Activated CD8-positive, alpha-beta T cell treated with anti-CD3 and anti-CD28 coated beads, Interleukin-2, amount 10 ng/mL, durations not matched to agents 7 days and 5 days (primary cell): ENCODE measurements at regions of chr1 and their contacts with region 1.

Region 1: DNA sequence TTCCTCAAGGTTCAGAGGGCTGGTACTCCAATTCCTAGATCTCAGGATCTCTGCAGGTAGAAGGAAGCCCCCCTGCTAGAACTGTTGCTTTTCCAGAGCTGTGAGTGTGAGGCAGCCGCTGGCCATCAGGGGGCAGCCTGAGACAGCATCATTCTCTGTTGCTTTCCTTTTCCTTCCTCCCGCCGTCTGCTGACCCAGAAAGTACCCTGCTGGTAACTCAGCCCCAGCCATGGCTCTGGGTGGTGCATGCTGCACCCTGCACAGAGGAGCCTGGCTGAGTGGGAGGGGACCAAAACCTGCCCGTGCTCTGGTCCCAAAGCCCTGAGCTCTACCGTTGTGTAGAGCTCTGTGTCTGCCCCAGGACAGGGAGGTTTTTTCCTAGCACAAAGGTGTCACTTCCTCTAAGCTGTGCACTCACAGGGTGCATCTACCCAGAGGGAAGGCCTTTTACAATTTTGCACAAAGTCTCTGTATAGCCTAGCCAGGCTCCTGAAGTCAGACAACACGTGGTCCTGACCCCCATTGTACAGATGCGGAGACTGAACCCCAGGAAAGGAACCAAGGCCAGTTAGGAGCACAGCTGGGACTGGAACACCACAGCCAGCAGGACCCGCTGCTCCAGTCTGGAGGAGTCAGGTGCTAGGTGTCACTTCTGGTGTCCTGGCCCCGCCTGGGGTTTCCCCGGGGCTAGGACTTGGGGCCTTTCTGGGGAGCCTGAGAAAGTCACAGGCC is 5.6 kb upstream of the FAM131C start:
- DNase-seq: peak; percentile 84
- ATAC-seq: peak; percentile 89
- H3K4me3 Mint-ChIP-seq: peak overlapping the region; percentile 56
- H3K27ac Mint-ChIP-seq: peak overlapping the region; percentile 83
- H3K4me1 Mint-ChIP-seq: peaks cover 14% of the 10 kb centered on the region
- H3K27me3 Mint-ChIP-seq: peaks cover 5% of the 10 kb centered on the region

Region 2: DNA sequence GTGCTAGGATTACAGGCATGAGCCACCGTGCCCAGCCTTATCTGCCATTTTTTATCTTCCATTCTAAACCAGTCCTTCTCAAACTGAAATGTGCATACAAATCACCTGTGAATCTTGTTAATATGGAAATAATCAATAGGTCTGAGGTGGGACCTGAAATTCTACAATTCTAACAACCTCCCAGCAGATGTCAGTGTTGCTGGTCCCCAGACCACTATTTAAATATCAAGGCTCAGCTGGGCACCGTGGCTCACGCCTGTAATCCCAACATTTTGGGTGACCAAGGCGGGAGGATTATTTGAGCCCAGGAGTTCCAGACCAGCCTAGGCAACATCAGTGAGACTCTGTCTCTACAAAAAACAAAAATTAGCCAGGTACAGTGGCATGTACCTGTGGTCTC is 275.7 kb before region 1 on chr1:
- CTCF ChIA-PET with region 1: no interaction called
- POLR2A ChIA-PET with region 1: no interaction called
- DNase-seq: peak; percentile 34
- ATAC-seq: no peak
- H3K4me3 Mint-ChIP-seq: no peak overlapping the region
- H3K27ac Mint-ChIP-seq: no peak overlapping the region
- H3K4me1 Mint-ChIP-seq: no peaks in the 10 kb centered on the region
- H3K27me3 Mint-ChIP-seq: peaks cover 10% of the 10 kb centered on the region

Region 3: DNA sequence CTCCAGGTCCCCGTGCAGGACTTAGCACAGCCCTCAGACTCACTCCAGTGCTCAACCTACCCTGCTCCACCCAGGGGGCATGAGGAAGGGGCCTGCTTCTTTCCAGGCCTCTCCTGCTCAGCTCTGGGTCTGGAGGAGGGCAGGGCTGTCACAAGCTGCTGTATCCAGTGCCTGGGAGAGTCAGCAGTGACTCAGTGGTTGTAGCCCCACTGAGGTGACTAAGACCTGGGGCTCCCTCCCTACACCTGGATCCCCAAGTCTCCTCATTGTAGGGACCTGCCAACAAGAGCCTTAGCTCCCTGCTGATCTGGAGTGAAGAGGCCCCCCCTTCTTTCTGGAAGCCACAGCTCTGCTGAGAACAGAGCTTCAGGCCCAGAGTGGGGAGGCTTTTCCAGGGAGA is 30.5 kb after region 1 on chr1:
- CTCF ChIA-PET with region 1: interaction called, 10 read pairs
- POLR2A ChIA-PET with region 1: no interaction called
- DNase-seq: no peak
- ATAC-seq: no peak
- H3K4me3 Mint-ChIP-seq: no peak overlapping the region
- H3K27ac Mint-ChIP-seq: no peak overlapping the region
- H3K4me1 Mint-ChIP-seq: no peaks in the 10 kb centered on the region
- H3K27me3 Mint-ChIP-seq: peaks cover 24% of the 10 kb centered on the region

Region 4: GRCh38 chr1:16181887-16182719 is 103.0 kb after region 1 on chr1:
- CTCF ChIA-PET with region 1: interaction called, 244 read pairs
- POLR2A ChIA-PET with region 1: interaction called, 3 read pairs
- DNase-seq: no peak
- ATAC-seq: no peak
- H3K4me3 Mint-ChIP-seq: no peak overlapping the region
- H3K27ac Mint-ChIP-seq: no peak overlapping the region
- H3K4me1 Mint-ChIP-seq: no peaks in the 10 kb centered on the region
- H3K27me3 Mint-ChIP-seq: peaks cover 7% of the 10 kb centered on the region

Region 5: GRCh38 chr1:16199157-16199501 is 120.0 kb after region 1 on chr1:
- CTCF ChIA-PET with region 1: interaction called, 12 read pairs
- POLR2A ChIA-PET with region 1: no interaction called
- DNase-seq: no peak
- ATAC-seq: no peak
- H3K4me3 Mint-ChIP-seq: no peak overlapping the region
- H3K27ac Mint-ChIP-seq: peak overlapping the region; percentile 24
- H3K4me1 Mint-ChIP-seq: peaks cover 9% of the 10 kb centered on the region
- H3K27me3 Mint-ChIP-seq: no peaks in the 10 kb centered on the region

Region 6: GRCh38 chr1:16243936-16244649 is 165.0 kb after region 1 on chr1:
- CTCF ChIA-PET with region 1: interaction called, 44 read pairs
- POLR2A ChIA-PET with region 1: no interaction called
- DNase-seq: peak; percentile 86
- ATAC-seq: peak; percentile 82
- H3K4me3 Mint-ChIP-seq: no peak overlapping the region
- H3K27ac Mint-ChIP-seq: no peak overlapping the region
- H3K4me1 Mint-ChIP-seq: peaks cover 16% of the 10 kb centered on the region
- H3K27me3 Mint-ChIP-seq: no peaks in the 10 kb centered on the region